Ascending aorta (tissue), 2 donors: ENCODE measurements at regions of chr19 and their contacts with region 1.

Region 1: GRCh38 chr19:41883821-41884733 is 1.1 kb downstream of the ARHGEF1 start:
- DNase-seq: peak; percentile 84 to 97
- H3K4me3 ChIP-seq: peak overlapping the region; percentile 91 to 100
- H3K27ac ChIP-seq: peak overlapping the region in 1 of 2 donors; percentile 90
- H3K4me1 ChIP-seq: peaks cover 12% of the 10 kb centered on the region in 2 donors
- H3K27me3 ChIP-seq: no peaks in the 10 kb centered on the region
- CTCF ChIP-seq: no peak

Region 2: DNA sequence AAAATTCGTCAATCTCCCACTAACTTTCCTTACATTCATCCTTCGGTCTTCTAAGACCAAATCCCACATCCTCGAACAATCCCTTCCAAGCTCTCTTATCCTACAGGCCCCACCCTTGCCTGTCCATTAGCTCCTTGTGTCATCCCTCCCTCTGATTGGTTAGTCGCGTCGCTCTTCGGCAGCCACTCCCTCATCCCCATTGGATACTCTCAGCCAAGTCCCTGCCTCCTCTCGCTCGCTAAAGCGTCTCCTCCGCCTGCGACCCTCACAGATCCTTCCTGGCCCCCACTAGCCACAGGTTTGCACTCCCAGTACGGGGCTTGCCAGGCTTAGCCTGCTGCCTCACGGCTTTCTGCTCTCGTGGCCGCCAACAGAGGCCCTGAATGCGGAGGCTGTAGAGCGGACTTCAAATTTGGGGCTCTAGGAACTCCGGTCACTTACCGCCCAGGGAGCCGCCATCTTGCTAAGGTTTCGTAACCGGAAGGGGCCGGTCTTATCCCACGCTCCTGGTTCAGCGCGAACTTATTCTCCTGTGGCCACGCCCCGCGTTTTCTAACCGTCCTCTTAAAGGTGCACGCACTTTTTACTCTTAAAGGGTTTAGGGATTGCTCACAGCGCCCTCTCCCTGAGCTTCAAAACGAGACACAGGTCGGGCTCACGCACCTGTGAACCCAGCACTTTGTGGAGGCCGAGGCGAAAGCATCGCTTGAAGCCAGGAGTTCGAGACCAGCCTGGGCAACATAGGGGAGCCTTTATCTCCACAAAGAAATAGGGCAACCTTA is 444.4 kb before region 1 on chr19 and contains the start of gene DMAC2:
- intact Hi-C with region 1: loop called (anchors 5 kb)
- DNase-seq: peak; percentile 90 to 99
- H3K4me3 ChIP-seq: peak within 1 kb of the TSS; percentile 66 to 78
- H3K27ac ChIP-seq: peak within 1 kb of the TSS; percentile 90 to 92
- H3K4me1 ChIP-seq: no peaks in the 10 kb centered on the region
- H3K27me3 ChIP-seq: no peaks in the 10 kb centered on the region
- CTCF ChIP-seq: peak in 2 of 3 experiments; percentile 51 to 61
- total RNA-seq, gene DMAC2: 21.2 TPM

Region 3: DNA sequence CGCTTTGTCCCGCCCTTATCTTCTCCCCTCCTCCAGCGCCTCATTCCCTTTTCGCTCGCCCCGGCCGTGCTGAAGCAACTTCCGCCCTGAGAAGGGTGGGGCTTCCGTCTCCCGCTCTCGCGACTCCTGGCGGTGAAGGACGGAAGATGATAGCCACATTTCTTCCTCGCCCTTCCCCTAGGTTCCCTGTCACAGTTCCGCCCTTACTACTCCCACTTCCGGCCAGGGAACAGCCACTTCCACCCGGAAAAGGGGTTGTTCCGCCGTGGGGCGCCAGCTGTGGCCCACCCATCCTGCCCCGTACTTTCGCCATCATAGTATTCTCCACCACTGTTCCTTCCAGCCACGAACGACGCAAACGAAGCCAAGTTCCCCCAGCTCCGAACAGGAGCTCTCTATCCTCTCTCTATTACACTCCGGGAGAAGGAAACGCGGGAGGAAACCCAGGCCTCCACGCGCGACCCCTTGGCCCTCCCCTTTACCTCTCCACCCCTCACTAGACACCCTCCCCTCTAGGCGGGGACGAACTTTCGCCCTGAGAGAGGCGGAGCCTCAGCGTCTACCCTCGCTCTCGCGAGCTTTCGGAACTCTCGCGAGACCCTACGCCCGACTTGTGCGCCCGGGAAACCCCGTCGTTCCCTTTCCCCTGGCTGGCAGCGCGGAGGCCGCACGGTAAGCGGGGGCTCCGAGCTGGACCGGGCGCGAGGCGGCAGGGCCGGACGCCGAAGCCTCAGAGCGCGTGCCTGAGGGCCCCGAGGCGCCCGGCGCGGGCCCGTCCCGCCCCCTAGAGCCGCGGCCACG is 24.3 kb before region 1 on chr19 and contains the start of gene RPS19:
- intact Hi-C with region 1: loop called (anchors 1 kb)
- DNase-seq: peak; percentile 92 to 99
- H3K4me3 ChIP-seq: peak within 1 kb of the TSS; percentile 83 to 99
- H3K27ac ChIP-seq: peak within 1 kb of the TSS; percentile 92 to 95
- H3K4me1 ChIP-seq: peaks cover 23 to 27% of the 10 kb centered on the region in 2 donors
- H3K27me3 ChIP-seq: no peaks in the 10 kb centered on the region
- CTCF ChIP-seq: peak; percentile 60 to 63 (median 60)
- total RNA-seq, gene RPS19: 956 TPM

Region 4: DNA sequence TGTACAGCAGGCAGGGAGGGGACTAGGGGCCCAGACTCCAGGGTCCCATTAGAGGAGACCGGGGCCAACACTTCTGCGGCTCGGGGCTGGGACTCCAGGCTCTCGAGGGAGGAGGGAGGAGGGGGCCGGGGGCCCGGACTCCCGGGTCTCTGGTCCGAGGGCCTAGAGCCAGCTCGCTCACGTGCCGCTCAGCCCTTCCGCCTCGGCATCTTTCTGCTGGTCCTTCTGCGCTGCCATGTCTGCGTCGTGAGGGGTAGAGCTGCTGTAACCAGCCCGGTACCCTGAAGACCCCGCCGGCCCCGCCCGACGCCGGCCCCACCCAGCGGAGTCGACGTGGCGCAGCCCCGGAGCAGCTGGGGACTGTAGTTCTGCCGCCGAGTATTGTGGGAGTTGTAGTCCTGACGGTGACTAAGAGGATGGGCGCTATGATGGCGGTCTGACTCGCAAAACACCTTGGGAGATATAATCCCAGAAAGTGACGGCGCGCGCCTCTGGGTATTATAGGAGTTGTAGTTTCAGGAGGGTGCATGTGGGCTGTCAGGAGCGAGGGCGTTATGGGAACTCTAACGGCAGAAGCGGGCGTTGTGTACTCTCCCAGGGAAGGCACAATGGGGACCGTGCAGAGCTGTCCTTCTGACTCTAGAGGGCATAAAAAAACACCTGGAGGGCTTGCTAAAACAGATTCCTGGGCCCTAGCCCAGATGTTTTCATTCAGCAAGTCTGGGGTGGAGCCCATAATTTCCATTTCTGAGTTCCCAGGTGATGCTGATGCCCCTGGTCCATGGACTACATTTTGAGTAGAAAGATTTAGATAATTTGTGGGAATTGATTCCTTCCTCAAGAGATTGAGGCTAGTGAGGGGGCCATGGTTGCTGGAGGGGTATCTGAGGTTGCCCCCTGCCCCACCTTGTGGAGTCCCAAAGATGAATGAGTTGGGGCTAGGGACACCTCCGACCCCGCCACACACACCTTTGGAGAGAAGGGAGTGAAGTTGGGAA is 75.3 kb after region 1 on chr19 and contains the start of gene RABAC1:
- intact Hi-C with region 1: loop called (anchors 1 kb)
- DNase-seq: peak; percentile 64 to 95
- H3K4me3 ChIP-seq: peak within 1 kb of the TSS; percentile 83 to 96
- H3K27ac ChIP-seq: peak within 1 kb of the TSS; percentile 92 to 93
- H3K4me1 ChIP-seq: peaks cover 3 to 9% of the 10 kb centered on the region in 2 donors
- H3K27me3 ChIP-seq: no peaks in the 10 kb centered on the region
- CTCF ChIP-seq: no peak
- total RNA-seq, gene RABAC1: 360 TPM

Region 5: DNA sequence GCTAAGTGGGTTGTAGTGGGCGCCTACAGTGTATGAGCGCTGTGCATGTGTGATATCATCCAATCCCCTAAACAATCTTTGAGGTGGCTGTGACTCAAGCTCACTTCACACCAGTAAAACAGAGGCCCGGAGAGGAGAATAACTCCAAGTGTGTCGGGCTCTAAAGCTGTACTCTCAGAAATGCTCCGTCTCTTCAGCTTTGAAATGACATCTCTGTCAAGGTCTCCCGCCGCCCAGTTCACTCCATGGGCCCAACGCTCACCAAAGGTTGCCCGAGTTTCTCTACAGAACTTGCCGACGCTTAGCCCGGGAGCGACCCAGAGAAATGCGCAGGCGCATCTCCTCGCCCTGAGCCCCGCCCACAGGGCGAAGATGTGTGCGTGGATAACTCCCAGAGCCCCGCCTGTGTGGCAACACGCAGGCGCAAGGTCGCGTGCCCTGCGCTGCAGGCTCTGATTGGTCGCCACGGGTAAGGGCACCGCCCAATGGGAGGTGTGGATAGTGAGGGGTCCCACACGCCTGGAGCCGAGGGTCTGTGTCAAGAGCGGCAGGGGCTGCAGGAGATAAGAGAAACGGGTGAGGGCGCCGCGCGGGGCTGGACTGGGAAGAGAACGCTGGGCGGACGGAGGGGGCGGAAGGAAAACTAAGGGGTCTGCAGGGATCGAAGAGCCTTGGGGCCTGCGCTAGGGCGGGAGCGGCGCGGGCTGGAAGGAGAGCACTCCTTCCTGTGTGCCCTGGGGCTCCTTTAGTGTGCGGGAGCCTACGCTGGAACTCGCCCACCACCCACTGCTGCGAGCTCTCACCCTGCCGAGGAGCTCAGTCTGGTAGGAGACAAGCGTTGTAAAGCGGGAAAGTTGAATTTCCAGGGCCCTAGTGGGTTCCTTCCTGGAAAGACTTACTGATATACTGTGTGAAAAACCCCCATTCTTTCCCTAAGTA is 336.0 kb after region 1 on chr19 and contains the start of gene ZNF526:
- intact Hi-C with region 1: loop called (anchors 5 kb)
- DNase-seq: peak; percentile 94 to 98
- H3K4me3 ChIP-seq: peak within 1 kb of the TSS; percentile 61 to 93
- H3K27ac ChIP-seq: peak within 1 kb of the TSS; percentile 84 to 90
- H3K4me1 ChIP-seq: peaks cover 0 to 34% of the 10 kb centered on the region in 2 donors
- H3K27me3 ChIP-seq: no peaks in the 10 kb centered on the region
- CTCF ChIP-seq: no peak
- total RNA-seq, gene ZNF526: 7.0 TPM